MCF 10A (cell line): ENCODE measurements at regions of chr12 and their contacts with region 1.

Region 1: DNA sequence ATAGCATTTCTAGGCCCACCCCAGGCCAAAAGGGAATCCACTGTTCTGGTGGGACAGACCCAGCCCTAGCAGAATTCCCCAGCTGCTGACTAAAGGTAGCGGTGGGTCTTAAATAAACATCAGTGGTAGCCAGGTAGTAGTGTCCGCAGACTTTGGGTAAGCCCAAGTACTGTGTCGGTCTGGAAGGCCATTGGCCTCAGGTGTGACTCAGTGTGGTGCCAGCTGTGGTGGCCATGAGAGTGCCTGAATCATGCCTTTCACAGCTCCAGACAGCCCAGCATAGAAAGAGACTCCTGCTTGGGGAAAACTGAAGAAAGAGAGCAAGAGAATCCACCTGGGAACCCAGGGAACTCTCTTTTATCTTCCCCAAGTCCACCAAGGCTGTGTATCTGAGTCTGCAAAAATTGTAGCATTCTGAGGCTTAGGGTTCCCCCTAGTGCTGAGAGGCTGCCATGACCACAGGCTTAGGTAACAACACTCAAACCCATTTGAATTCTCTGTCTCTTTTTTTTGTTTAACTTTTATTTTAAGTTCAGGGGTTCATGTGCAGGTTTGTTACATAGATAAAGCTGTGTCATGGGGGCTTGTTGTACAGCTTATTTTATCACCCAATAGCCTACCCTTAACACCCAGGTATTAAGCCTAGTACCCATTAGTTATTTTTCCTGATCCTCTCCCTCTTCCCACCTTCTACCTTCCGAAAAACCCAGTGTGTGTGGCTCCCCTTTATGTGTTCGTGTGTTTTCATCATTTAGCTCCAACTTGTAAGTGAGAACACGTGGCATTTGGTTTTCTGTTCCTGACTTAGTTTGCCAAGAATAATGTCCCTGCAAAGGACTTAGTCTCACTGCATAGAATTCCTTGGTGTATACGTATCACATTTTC is 16.7 kb upstream of the CD163L1 start:
- DNase-seq: peak; percentile 69
- H3K4me3 Mint-ChIP-seq: no peak overlapping the region
- H3K27ac Mint-ChIP-seq: no peak overlapping the region
- H3K4me1 Mint-ChIP-seq: peaks cover 5% of the 10 kb centered on the region
- H3K27me3 Mint-ChIP-seq: peaks cover 5% of the 10 kb centered on the region
- CTCF ChIP-seq: peak; percentile 95

Region 2: DNA sequence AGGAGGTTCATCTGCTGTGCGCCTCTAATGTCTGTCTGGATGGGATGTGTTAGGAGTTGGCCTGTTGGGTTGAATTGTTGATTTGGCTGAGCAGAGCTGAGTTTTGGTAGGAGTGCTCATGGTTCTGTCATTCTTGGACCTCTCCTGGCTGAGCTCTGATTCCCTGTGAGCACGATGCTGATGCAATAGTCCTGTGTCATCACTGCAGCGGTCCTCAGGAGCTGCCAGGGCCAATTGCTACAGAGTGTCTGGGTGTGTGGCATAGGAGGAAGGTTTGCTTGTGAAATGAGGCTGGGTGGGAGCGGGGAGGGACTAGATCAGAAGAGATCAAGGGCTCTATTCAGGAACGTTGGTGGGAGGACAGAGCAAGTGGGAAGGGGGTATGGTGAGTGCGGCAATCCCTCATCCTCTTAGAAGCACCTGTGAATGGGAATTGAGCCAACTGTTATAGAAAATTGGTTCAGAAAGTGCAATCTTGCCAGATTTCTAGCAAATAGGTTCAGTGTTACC is 249.9 kb before region 1 on chr12:
- CTCF ChIA-PET with region 1: interaction called, 24 read pairs
- POLR2A ChIA-PET with region 1: no interaction called
- intact Hi-C with region 1: no loop called
- DNase-seq: no peak
- H3K4me3 Mint-ChIP-seq: no peak overlapping the region
- H3K27ac Mint-ChIP-seq: no peak overlapping the region
- H3K4me1 Mint-ChIP-seq: no peaks in the 10 kb centered on the region
- H3K27me3 Mint-ChIP-seq: peaks cover 6% of the 10 kb centered on the region
- CTCF ChIP-seq: no peak

Region 3: GRCh38 chr12:7229741-7230140 is 230.9 kb before region 1 on chr12:
- CTCF ChIA-PET with region 1: interaction called, 15 read pairs
- POLR2A ChIA-PET with region 1: no interaction called
- intact Hi-C with region 1: no loop called
- DNase-seq: no peak
- H3K4me3 Mint-ChIP-seq: no peak overlapping the region
- H3K27ac Mint-ChIP-seq: no peak overlapping the region
- H3K4me1 Mint-ChIP-seq: no peaks in the 10 kb centered on the region
- H3K27me3 Mint-ChIP-seq: peaks cover 17% of the 10 kb centered on the region
- CTCF ChIP-seq: no peak

Region 4: DNA sequence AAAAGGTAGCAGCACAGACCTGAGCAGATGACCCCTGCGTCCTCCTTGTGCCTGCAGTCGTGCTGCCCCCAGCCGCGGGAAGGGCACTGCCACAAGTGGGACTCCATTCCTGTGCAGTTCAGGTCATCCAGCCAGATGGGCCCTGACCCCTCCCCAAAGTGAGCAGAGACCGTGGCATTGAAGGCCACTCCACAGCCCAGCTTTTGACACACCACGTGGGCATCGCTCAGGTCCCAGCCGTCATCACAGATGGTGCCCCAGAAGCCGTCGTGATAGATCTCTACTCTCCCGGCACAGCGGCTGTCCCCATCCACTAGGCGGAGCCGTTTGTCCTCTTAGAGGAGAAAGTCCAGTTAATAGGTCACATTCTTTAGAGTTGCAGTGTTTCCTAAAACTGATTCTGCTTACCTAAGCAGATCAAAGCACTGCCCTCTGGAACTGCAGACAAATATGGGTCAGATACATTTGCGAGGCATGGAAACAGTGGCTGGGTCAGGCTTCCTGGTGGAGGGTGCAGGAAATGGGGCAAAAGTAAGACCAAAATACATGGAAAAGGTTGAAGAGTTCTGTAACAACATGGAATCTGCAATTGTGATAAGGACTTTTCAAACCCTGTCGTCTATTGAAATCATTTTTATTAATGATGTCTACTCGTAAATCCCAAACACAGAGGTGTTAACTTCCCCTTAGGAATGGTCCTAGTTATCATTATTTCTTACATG is 86.0 kb before region 1 on chr12:
- CTCF ChIA-PET with region 1: interaction called, 3 read pairs
- POLR2A ChIA-PET with region 1: no interaction called
- intact Hi-C with region 1: loop called (anchors 1 kb)
- DNase-seq: peak; percentile 72
- H3K4me3 Mint-ChIP-seq: no peak overlapping the region
- H3K27ac Mint-ChIP-seq: no peak overlapping the region
- H3K4me1 Mint-ChIP-seq: peaks cover 11% of the 10 kb centered on the region
- H3K27me3 Mint-ChIP-seq: no peaks in the 10 kb centered on the region
- CTCF ChIP-seq: peak; percentile 32